Upper lobe of right lung (tissue), 1 donor: ENCODE measurements at regions of chr7 and their contacts with region 1.

Region 1: GRCh38 chr7:107462740-107463444 is 7.0 kb upstream of the GPR22 start:
- DNase-seq: no peak
- ATAC-seq: peak; percentile 89
- H3K4me3 ChIP-seq: no peak overlapping the region
- H3K27ac ChIP-seq: no peak overlapping the region
- H3K4me1 ChIP-seq: no peaks in the 10 kb centered on the region
- H3K27me3 ChIP-seq: no peaks in the 10 kb centered on the region
- CTCF ChIP-seq: peak; percentile 68

Region 2: DNA sequence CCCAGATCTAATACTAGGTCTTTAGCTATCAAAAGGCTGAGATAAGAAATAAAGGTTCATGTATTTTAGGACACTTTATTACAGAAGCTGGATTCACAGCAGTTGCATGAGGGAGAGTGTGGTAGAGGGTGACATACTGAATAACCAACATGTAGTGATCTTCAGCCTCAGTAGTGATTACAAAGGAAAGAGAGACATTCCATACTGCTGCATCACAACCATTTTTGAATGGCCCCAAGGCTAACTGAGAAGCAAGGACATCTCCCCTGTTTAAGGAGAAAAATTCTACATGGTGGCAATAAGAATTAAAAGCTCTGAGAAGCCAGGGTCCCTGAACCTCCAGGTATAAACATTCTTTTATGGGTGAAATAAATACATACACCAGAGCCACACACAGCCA is 65.6 kb after region 1 on chr7:
- intact Hi-C with region 1: no loop called
- DNase-seq: no peak
- ATAC-seq: no peak
- H3K4me3 ChIP-seq: no peak overlapping the region
- H3K27ac ChIP-seq: no peak overlapping the region
- H3K4me1 ChIP-seq: peaks cover 5% of the 10 kb centered on the region
- H3K27me3 ChIP-seq: no peaks in the 10 kb centered on the region
- CTCF ChIP-seq: no peak

Region 3: GRCh38 chr7:107614425-107614824 is 151.5 kb after region 1 on chr7:
- intact Hi-C with region 1: no loop called
- DNase-seq: no peak
- ATAC-seq: no peak
- H3K4me3 ChIP-seq: no peak overlapping the region
- H3K27ac ChIP-seq: no peak overlapping the region
- H3K4me1 ChIP-seq: no peaks in the 10 kb centered on the region
- H3K27me3 ChIP-seq: no peaks in the 10 kb centered on the region
- CTCF ChIP-seq: no peak

Region 4: GRCh38 chr7:107723255-107723654 is 260.4 kb after region 1 on chr7:
- intact Hi-C with region 1: loop called (anchors 5 kb)
- DNase-seq: no peak
- ATAC-seq: no peak
- H3K4me3 ChIP-seq: no peak overlapping the region
- H3K27ac ChIP-seq: no peak overlapping the region
- H3K4me1 ChIP-seq: no peaks in the 10 kb centered on the region
- H3K27me3 ChIP-seq: peaks cover 7% of the 10 kb centered on the region
- CTCF ChIP-seq: no peak